Dorsolateral prefrontal cortex (tissue), 120 donors: ENCODE measurements at regions of chr20 and their contacts with region 1.

Region 1: DNA sequence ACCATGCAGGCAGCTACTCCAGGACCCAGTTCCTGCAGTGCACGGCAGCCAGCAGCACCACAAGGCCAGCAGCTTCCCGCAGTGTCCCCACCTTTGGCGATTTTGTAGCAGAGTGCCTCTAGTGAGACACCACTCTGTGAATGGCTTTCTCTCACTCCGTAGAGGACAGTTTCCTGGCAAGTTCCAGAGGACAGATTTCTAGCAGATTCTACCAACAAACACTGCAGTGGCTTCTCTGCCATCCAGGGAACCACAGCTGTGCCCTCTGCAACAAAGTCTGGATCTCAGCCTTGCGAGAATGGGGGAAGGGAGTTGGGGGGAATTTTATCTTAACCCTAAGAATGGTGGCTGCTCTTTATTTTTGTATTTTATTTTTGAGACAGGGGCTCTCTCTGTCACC is 28.7 kb downstream of the SNHG17 start:
- DNase-seq: peak in 1 of 10 donors; percentile 9
- H3K4me3 ChIP-seq: no peak overlapping the region
- H3K27ac ChIP-seq: peak overlapping the region in 27 of 59 donors; percentile 8 to 77 (median 54)
- H3K27me3 ChIP-seq: no peaks in the 10 kb centered on the region
- CTCF ChIP-seq: no peak

Region 2: DNA sequence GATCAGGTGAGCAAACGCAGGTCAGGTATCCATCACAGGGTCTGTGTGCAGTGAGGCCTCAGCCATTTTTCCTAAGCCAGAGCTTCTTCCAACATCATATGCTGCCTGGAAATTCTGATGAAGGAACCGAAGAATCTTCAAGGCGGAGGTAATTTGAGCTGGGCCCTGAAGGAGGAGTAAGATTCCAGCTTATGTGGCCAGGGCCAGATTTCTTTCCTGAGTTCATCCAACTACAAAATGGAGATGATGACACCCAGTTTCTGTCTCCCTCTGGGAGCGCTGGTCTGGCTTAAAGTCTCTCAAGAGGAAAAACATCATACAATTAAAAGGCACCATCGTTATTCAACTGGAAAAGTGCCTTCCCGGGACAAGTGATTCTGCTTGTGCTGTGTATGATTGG is 1123.9 kb before region 1 on chr20:
- intact Hi-C with region 1: loop called in 1 of 2 experiments (anchors 10 kb)
- DNase-seq: no peak
- H3K4me3 ChIP-seq: no peak overlapping the region
- H3K27ac ChIP-seq: no peak overlapping the region
- H3K27me3 ChIP-seq: peaks cover 0 to 10% (median 0%) of the 10 kb centered on the region in 45 donors
- CTCF ChIP-seq: peak in 1 of 56 donors; percentile 9

Region 3: GRCh38 chr20:38057351-38057972 is 349.0 kb before region 1 on chr20:
- intact Hi-C with region 1: loop called in 1 of 2 experiments (anchors 10 kb)
- DNase-seq: peak; percentile 69 to 90 (median 81)
- H3K4me3 ChIP-seq: no peak overlapping the region
- H3K27ac ChIP-seq: peak overlapping the region in 1 of 59 donors; percentile 29
- H3K27me3 ChIP-seq: no peaks in the 10 kb centered on the region
- CTCF ChIP-seq: peak; percentile 79 to 99 (median 93)

Region 4: DNA sequence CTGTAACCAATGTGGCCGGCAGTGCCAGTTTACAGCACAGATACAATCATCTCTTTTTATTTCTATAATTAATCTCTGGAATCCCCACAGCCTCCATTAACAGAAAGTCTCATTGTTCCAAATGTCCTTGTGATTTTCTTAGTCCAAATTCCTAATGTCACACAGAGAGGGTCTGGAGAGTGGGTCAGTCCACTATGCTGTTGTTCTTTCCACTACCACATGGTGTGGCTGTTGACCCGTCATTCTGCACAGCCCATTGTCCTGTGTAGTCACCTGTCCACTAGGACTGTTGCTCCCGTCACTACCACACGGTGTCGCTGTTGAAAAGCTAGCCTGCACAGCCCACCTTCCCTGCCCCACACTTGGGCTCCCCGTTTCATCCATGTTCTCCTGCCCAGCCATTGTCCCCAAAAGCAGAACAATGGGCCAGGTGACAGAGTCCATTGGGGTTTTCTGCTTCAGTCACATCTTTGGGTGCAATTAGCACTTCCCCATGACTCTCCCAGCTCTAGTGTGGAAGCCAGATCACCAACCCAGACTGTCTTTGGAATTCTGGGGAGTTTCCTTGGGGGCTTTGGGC is 68.8 kb before region 1 on chr20:
- intact Hi-C with region 1: loop called in 1 of 2 experiments (anchors 2 kb)
- DNase-seq: peak in 5 of 10 donors; percentile 29 to 53 (median 42)
- H3K4me3 ChIP-seq: no peak overlapping the region
- H3K27ac ChIP-seq: peak overlapping the region in 47 of 59 donors; percentile 7 to 93 (median 67)
- H3K27me3 ChIP-seq: no peaks in the 10 kb centered on the region
- CTCF ChIP-seq: peak in 55 of 56 donors; percentile 18 to 77 (median 59)

Region 5: DNA sequence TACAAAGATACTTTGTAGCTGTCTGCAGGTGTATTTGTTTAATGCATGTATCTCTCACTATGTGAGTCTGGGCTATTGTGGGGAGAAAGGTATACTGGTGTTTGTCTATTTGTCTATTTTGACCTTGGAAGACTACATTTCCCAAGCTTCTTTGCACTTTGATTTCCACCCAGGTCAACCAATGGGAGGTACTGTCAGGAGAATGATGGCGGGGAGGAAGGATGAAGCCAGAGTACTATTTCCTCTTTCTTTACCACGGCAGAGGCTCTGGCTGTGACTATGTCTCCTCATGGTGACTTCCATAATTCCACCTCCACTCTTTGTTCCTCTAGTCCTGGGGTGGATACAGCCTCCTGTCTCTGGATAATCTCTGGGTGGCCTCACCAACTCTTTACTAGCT is 37.1 kb before region 1 on chr20:
- intact Hi-C with region 1: no loop called
- DNase-seq: no peak
- H3K4me3 ChIP-seq: no peak overlapping the region
- H3K27ac ChIP-seq: no peak overlapping the region
- H3K27me3 ChIP-seq: peaks cover 0 to 3% (median 0%) of the 10 kb centered on the region in 45 donors
- CTCF ChIP-seq: no peak